CD8-positive, alpha-beta memory T cell (primary cell): ENCODE measurements at regions of chr5 and their contacts with region 1.

Region 1: DNA sequence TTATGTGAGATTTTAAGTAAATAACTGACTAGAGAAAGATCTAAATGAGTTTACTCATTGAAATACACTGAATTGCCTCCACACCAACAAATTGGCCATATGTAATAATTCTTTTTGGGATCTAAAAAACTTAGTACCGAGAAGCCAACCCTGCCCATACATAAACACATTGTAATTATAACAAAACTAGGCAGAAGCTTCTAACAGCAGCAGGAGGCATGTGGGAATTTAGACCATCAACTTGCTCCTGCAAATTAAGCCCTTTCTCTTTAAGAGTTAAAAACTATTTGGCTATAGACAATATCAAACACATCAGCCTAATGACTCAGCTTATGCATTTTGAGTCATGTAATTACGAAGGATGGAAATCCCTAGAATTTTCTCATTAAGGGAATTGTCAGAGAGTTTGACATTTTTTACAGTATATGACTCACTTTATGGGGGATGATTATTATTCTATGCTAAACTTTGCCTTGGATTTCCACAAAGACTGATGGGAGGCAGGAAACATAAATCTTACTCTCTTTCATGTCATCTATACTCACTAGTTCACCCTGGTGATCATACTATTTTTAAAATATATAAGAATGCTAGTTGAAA is 1.0 kb downstream of the IL7R start:
- DNase-seq: peak in 1 of 5 donors; percentile 31
- H3K4me3 ChIP-seq: peak overlapping the region; percentile 93
- H3K4me3 Mint-ChIP-seq: peak overlapping the region; percentile 90 to 97 (median 93)
- H3K27ac ChIP-seq: peak overlapping the region; percentile 95
- H3K27ac Mint-ChIP-seq: peak overlapping the region; percentile 68 to 100 (median 98)
- H3K4me1 ChIP-seq: peaks cover 55% of the 10 kb centered on the region
- H3K4me1 Mint-ChIP-seq: peaks cover 56 to 71% (median 59%) of the 10 kb centered on the region in 3 donors
- H3K27me3 ChIP-seq: no peaks in the 10 kb centered on the region
- H3K27me3 Mint-ChIP-seq: peaks cover 0 to 1% of the 10 kb centered on the region in 2 donors

Region 2: GRCh38 chr5:35815089-35815936 is 42.4 kb before region 1 on chr5:
- CTCF ChIA-PET with region 1: interaction called, 165 read pairs
- POLR2A ChIA-PET with region 1: interaction called, 125 read pairs
- DNase-seq: no peak
- H3K4me3 ChIP-seq: peak overlapping the region; percentile 28
- H3K4me3 Mint-ChIP-seq: no peak overlapping the region
- H3K27ac ChIP-seq: peak overlapping the region; percentile 10
- H3K27ac Mint-ChIP-seq: no peak overlapping the region
- H3K4me1 ChIP-seq: peaks cover 91% of the 10 kb centered on the region
- H3K4me1 Mint-ChIP-seq: peaks cover 19 to 49% (median 45%) of the 10 kb centered on the region in 3 donors
- H3K27me3 ChIP-seq: no peaks in the 10 kb centered on the region
- H3K27me3 Mint-ChIP-seq: no peaks in the 10 kb centered on the region

Region 3: DNA sequence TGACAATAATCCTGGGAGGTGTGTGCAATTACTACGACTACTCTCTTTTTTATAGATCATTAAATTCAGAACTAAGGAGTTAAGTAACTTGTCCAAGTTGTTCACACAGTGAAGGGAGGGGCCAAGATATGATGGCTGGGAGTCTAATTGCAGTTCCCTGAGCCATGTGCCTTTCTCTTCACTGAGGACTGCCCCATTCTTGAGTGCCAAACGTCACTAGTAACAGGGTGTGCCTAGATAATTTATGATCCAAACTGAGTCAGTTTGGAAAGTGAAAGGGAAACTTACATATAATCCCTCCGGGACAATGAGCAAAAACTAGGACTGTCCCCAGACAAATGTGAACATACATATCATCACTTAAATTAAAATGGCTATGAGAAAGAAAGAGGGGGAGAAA is 19.2 kb after region 1 on chr5:
- CTCF ChIA-PET with region 1: interaction called, 15 read pairs
- POLR2A ChIA-PET with region 1: interaction called, 12 read pairs
- DNase-seq: no peak
- H3K4me3 ChIP-seq: no peak overlapping the region
- H3K4me3 Mint-ChIP-seq: peak overlapping the region in 4 of 7 donors; percentile 9 to 57 (median 19)
- H3K27ac ChIP-seq: no peak overlapping the region
- H3K27ac Mint-ChIP-seq: peak overlapping the region; percentile 61 to 91 (median 79)
- H3K4me1 ChIP-seq: peaks cover 62% of the 10 kb centered on the region
- H3K4me1 Mint-ChIP-seq: peaks cover 76 to 96% (median 93%) of the 10 kb centered on the region in 3 donors
- H3K27me3 ChIP-seq: no peaks in the 10 kb centered on the region
- H3K27me3 Mint-ChIP-seq: no peaks in the 10 kb centered on the region